Motor neuron (in vitro differentiated cells): ENCODE measurements at regions of chr21 and their contacts with region 1.

Region 1: GRCh38 chr21:42833439-42833815 is 45.9 kb downstream of the WDR4 start:
- ATAC-seq: peak in 5 of 8 experiments; percentile 9 to 45 (median 18)
- H3K4me3 ChIP-seq: no peak overlapping the region
- H3K27ac ChIP-seq: no peak overlapping the region
- H3K4me1 ChIP-seq: no peaks in the 10 kb centered on the region

Region 2: GRCh38 chr21:42593007-42593806 is 240.2 kb before region 1 on chr21:
- in situ Hi-C with region 1: loop called in 1 of 9 experiments (anchors 25 kb)
- ATAC-seq: peak; percentile 89 to 100 (median 98)
- H3K4me3 ChIP-seq: no peak overlapping the region
- H3K27ac ChIP-seq: no peak overlapping the region
- H3K4me1 ChIP-seq: peaks cover 6 to 10% of the 10 kb centered on the region in 2 donors

Region 3: DNA sequence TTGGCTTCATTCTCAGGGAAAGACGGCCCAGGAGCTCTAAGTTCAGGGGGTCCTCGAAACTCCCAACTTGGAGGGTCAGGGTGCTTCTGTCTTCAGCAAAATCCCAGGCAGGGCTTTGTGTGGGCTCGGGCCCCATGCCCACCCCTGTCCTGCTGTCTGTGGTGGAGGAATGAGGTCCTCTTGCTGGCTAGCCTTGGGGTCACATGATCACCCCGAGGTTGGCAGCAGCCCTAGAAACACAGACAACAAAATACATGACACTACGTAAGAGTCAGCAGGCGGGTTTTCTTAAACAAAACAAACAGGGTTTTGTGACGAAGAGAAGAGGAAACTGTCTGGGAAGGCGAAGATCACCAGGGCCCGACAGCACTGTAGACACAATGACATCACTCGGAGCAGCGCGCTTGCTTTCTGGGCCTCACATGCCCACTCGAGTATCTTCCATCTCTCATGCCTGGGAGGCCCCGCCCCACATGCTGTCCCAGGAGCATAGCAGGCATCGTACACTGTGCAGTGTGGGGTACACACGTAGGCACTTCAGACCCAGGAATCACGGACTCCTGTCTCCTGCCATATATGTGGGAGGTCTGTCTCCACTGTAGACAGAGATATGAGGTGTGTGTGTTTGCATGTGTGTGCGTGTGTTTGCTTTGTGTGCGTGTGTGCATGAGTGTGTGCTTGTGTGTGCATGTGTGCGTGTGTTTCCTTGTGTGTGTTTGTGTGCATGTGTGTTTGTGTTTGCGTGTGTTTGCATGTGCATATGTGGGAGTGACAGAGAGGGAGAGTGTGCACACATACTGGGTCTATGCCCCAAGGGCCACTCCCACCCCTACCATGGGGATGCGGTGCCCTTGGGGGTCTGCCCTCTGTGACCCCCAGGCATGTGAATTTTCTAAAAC is 498.8 kb after region 1 on chr21:
- in situ Hi-C with region 1: no loop called
- ATAC-seq: peak in 5 of 8 experiments; percentile 66 to 76 (median 71)
- H3K4me3 ChIP-seq: no peak overlapping the region
- H3K27ac ChIP-seq: peak overlapping the region in 1 of 2 donors; percentile 66
- H3K4me1 ChIP-seq: peaks cover 33 to 44% of the 10 kb centered on the region in 2 donors